Endothelial cell of umbilical vein (primary cell): ENCODE measurements at regions of chr11 and their contacts with region 1.

Region 1: DNA sequence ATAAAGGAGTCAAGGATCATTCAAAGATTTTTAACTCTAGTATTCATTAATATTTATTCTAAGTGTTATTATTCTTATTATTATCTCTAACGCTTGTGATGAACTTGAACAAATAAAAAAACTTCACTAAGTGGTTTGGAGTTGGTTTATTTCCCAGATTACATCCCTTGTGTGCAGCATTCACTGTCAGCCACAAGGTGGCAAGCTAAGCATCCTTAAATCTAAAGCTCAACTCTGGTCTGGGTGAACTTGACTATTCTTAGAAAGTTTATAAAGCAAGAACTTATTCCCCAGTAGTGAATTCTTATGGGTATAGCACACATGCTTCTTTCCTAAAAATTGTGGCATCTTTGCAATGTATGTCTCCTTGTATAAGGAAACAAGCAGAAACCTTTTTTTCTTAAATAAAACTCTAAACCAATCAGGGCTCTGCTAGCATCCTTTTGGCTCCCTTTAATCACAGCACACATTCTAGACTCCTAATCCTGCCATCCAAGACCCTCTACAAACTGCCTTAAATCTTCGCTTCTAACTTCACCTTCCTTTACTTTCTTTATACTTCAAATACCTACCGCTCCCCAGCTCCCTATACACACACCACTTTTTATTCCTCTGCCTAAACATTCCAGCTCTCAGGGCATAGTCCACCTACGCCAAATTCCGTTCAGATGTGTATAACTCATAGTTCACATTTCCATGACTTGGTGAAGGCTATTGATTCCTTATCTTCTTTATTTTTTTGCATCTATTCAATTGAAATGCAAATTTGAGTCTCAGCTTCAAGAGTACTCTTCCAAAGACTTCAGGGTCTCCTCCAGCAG is 1068.8 kb downstream of the DLG2 start:
- DNase-seq: peak; percentile 35
- H3K4me3 ChIP-seq: no peak overlapping the region
- H3K27ac ChIP-seq: no peak overlapping the region
- H3K4me1 ChIP-seq: no peaks in the 10 kb centered on the region
- H3K27me3 ChIP-seq: no peaks in the 10 kb centered on the region
- CTCF ChIP-seq: peak; percentile 48 to 63
- POLR2A ChIP-seq: no peak

Region 2: DNA sequence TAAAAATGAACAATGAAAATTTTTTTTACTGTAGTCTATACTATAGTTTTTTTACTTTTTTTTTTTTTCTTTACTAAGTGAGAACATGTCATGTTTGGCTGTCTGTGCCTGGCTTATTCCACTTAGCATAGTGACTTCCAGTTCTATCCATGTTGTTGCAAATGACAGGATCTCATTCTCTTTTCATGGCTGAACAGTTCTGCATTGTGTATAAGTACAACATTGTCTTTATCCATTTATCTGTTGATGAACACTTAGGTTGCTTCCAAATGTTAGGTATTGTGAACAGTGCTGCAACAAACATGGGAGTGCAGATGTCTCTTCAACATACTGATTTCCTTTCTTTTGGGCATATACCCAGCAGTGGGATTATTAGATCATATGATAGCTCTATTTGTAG is 1184.0 kb before region 1 on chr11:
- CTCF ChIA-PET with region 1: no interaction called
- POLR2A ChIA-PET with region 1: no interaction called
- dilution Hi-C with region 1: no loop called
- intact Hi-C with region 1: no loop called
- DNase-seq: no peak
- H3K4me3 ChIP-seq: no peak overlapping the region
- H3K27ac ChIP-seq: no peak overlapping the region
- H3K4me1 ChIP-seq: no peaks in the 10 kb centered on the region
- H3K27me3 ChIP-seq: no peaks in the 10 kb centered on the region
- CTCF ChIP-seq: no peak
- POLR2A ChIP-seq: no peak

Region 3: GRCh38 chr11:84543367-84544159 is 14.7 kb before region 1 on chr11:
- CTCF ChIA-PET with region 1: interaction called, 12 read pairs
- POLR2A ChIA-PET with region 1: no interaction called
- dilution Hi-C with region 1: no loop called
- intact Hi-C with region 1: no loop called
- DNase-seq: no peak
- H3K4me3 ChIP-seq: no peak overlapping the region
- H3K27ac ChIP-seq: no peak overlapping the region
- H3K4me1 ChIP-seq: no peaks in the 10 kb centered on the region
- H3K27me3 ChIP-seq: no peaks in the 10 kb centered on the region
- CTCF ChIP-seq: no peak
- POLR2A ChIP-seq: no peak